HepG2 (cell line): ENCODE measurements at regions of chr10 and their contacts with region 1.

Region 1: GRCh38 chr10:48656241-48656913 is 28.3 kb upstream of the WDFY4 start:
- DNase-seq: peak; percentile 66
- ATAC-seq: peak; percentile 94
- H3K4me3 ChIP-seq: peak overlapping the region; percentile 24 to 68 (median 34); a peak in 5 of 6 replicates
- H3K27ac ChIP-seq: no peak overlapping the region
- H3K4me1 ChIP-seq: peaks cover 16% of the 10 kb centered on the region
- H3K27me3 ChIP-seq: peaks cover 4 to 19% of the 10 kb centered on the region in 2 experiments; a peak in 4 of 5 replicates
- CTCF ChIP-seq: peak; percentile 89
- EP300 ChIP-seq: no peak
- POLR2A ChIP-seq: no peak
- RAD21 ChIP-seq: peak; percentile 91

Region 2: GRCh38 chr10:48506147-48506917 is 150.0 kb before region 1 on chr10:
- CTCF ChIA-PET with region 1: no interaction called
- POLR2A ChIA-PET with region 1: no interaction called
- in situ Hi-C with region 1: no loop called
- intact Hi-C with region 1: no loop called
- DNase-seq: peak; percentile 88
- ATAC-seq: peak; percentile 96
- H3K4me3 ChIP-seq: no peak overlapping the region
- H3K27ac ChIP-seq: no peak overlapping the region
- H3K4me1 ChIP-seq: 0 out of 2 replicates have a peak, but pooled peaks cover 6% of the 10 kb centered on the region
- H3K27me3 ChIP-seq: no peaks in the 10 kb centered on the region; a peak in 2 of 5 replicates
- CTCF ChIP-seq: peak; percentile 93
- EP300 ChIP-seq: no peak
- POLR2A ChIP-seq: no peak
- RAD21 ChIP-seq: peak; percentile 83

Region 3: GRCh38 chr10:48551861-48552591 is 104.4 kb before region 1 on chr10:
- CTCF ChIA-PET with region 1: interaction called, 6 read pairs
- POLR2A ChIA-PET with region 1: no interaction called
- in situ Hi-C with region 1: loop called (anchors 5 kb)
- intact Hi-C with region 1: loop called (anchors 1 kb)
- DNase-seq: no peak
- ATAC-seq: peak; percentile 67
- H3K4me3 ChIP-seq: no peak overlapping the region
- H3K27ac ChIP-seq: no peak overlapping the region
- H3K4me1 ChIP-seq: no peaks in the 10 kb centered on the region
- H3K27me3 ChIP-seq: peaks cover 0 to 15% of the 10 kb centered on the region in 2 experiments; a peak in 3 of 5 replicates
- CTCF ChIP-seq: peak; percentile 51
- EP300 ChIP-seq: no peak
- POLR2A ChIP-seq: no peak
- RAD21 ChIP-seq: no peak

Region 4: GRCh38 chr10:48708144-48708543 is 51.8 kb after region 1 on chr10:
- CTCF ChIA-PET with region 1: no interaction called
- POLR2A ChIA-PET with region 1: no interaction called
- in situ Hi-C with region 1: no loop called
- intact Hi-C with region 1: no loop called
- DNase-seq: no peak
- ATAC-seq: no peak
- H3K4me3 ChIP-seq: no peak overlapping the region
- H3K27ac ChIP-seq: no peak overlapping the region
- H3K4me1 ChIP-seq: no peaks in the 10 kb centered on the region
- H3K27me3 ChIP-seq: peaks cover 0 to 6% of the 10 kb centered on the region in 2 experiments; a peak in 1 of 5 replicates
- CTCF ChIP-seq: no peak
- EP300 ChIP-seq: no peak
- POLR2A ChIP-seq: no peak
- RAD21 ChIP-seq: no peak

Region 5: GRCh38 chr10:48981310-48981907 is 325.0 kb after region 1 on chr10:
- CTCF ChIA-PET with region 1: no interaction called
- POLR2A ChIA-PET with region 1: no interaction called
- in situ Hi-C with region 1: no loop called
- intact Hi-C with region 1: loop called (anchors 5 kb)
- DNase-seq: peak; percentile 24
- ATAC-seq: peak; percentile 97
- H3K4me3 ChIP-seq: no peak overlapping the region
- H3K27ac ChIP-seq: no peak overlapping the region
- H3K4me1 ChIP-seq: no peaks in the 10 kb centered on the region
- H3K27me3 ChIP-seq: peaks cover 0 to 3% of the 10 kb centered on the region in 2 experiments; a peak in 2 of 5 replicates
- CTCF ChIP-seq: peak; percentile 86
- EP300 ChIP-seq: no peak
- POLR2A ChIP-seq: no peak
- RAD21 ChIP-seq: peak; percentile 72

Region 6: GRCh38 chr10:49164559-49165188 is 508.3 kb after region 1 on chr10:
- CTCF ChIA-PET with region 1: interaction called, 5 read pairs
- POLR2A ChIA-PET with region 1: no interaction called
- in situ Hi-C with region 1: loop called (anchors 10 kb)
- intact Hi-C with region 1: no loop called
- DNase-seq: peak; percentile 28
- ATAC-seq: peak; percentile 92
- H3K4me3 ChIP-seq: no peak overlapping the region
- H3K27ac ChIP-seq: no peak overlapping the region
- H3K4me1 ChIP-seq: no peaks in the 10 kb centered on the region
- H3K27me3 ChIP-seq: no peaks in the 10 kb centered on the region; a peak in 1 of 5 replicates
- CTCF ChIP-seq: peak; percentile 69
- EP300 ChIP-seq: no peak
- POLR2A ChIP-seq: no peak
- RAD21 ChIP-seq: peak; percentile 51; the same call in 1 of the 2 replicates

Region 7: DNA sequence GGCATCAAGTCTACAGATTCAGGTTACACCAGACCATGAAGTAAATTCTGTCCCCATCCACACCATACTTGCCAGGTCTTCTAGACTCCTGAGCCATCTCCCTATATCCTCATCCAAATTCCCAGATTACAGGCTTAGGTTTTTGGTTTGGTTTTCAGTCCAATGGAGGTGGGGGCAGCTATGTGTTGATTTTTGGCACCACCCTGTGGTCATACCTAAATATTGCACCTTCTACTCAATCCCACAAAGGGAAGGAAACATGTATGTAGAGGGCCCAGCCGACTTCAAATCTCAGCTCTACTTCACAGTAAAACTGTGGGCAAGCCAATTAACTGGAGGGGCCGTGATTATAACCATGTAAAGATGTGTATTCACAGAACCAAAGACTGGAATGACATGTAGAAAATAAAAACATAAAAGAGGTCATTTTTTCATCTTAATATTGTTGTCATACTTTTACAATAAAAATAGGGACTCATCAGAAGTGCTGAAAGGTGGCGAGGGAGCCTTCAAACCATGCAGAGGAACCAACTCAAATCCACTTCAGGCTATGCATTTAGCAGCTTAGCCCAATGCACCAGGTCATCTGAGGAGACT is 862.7 kb after region 1 on chr10:
- CTCF ChIA-PET with region 1: interaction called, 3 read pairs
- POLR2A ChIA-PET with region 1: no interaction called
- in situ Hi-C with region 1: loop called (anchors 10 kb)
- intact Hi-C with region 1: loop called (anchors 2 kb)
- DNase-seq: peak; percentile 36
- ATAC-seq: peak; percentile 82
- H3K4me3 ChIP-seq: no peak overlapping the region
- H3K27ac ChIP-seq: no peak overlapping the region
- H3K4me1 ChIP-seq: peaks cover 12% of the 10 kb centered on the region
- H3K27me3 ChIP-seq: no peaks in the 10 kb centered on the region
- CTCF ChIP-seq: peak; percentile 73
- EP300 ChIP-seq: no peak
- POLR2A ChIP-seq: no peak
- RAD21 ChIP-seq: no peak; the same call in 1 of the 2 replicates